G401 (cell line): ENCODE measurements at regions of chr16 and their contacts with region 1.

Region 1: DNA sequence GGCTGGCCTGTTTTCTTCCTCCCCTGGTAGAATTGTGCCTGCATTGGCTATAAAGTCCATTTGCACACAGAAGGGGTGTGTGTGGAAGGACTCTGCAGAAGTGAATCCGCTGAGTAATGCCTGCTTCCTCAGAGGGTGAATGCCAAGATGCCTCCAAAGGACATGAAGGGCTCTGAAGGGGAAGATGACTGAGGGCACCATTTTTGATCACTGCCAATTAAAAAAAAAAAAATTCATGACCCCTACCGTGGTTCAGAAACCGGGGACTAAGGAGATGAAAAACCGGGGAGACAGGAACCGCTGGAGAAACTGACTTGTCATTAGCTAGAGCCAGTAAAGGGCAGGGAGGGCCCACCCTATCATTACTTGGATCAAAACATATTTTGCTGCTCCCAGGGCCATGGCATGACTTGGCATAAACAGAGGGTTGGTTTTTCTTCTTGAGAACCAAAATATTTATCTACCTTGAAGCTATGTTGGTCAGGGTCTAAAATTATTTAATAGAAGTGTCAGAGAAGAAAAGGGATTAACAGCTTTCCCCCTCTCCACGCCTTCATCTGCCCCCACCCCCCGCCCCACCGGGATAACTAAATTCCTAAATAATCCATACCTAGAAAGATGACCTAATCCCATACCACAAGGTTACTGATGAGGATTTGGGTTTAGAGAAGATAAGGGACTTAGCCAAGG is 3.6 kb upstream of the USP7 start:
- DNase-seq: no peak

Region 2: GRCh38 chr16:8924214-8924613 is 43.1 kb before region 1 on chr16:
- in situ Hi-C with region 1: loop called (anchors 5 kb)
- DNase-seq: peak; percentile 62